ENCODE measurements at regions of chr15 and their contacts with region 1.

Region 1: GRCh38 chr15:96345560-96346399 is 15.3 kb downstream of the NR2F2 start:
- DNase-seq: peak; percentile 95

Region 2: GRCh38 chr15:95169541-95170459 is 1176.0 kb before region 1 on chr15:
- intact Hi-C with region 1: loop called in 1 of 2 experiments (anchors 10 kb)
- DNase-seq: peak; percentile 85

Region 3: DNA sequence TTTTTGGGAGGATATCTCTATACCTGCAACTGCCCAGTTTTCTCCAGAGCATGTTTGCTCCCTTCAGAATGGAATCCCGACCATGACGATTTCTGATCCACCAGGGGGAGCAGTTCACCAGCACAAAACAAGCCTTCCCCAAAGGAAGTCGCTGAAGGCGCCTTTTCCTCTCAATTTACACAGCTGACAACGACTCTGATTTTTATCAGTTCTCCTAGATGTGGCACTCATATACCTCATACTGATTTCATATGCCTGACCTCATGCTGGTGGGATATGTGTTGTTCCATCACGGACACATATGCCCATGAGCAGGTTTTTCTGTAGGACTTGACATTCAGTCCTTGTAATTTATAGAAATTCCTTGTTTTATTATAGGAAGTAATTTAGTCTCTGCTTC is 1086.3 kb before region 1 on chr15:
- intact Hi-C with region 1: loop called in 1 of 2 experiments (anchors 10 kb)
- DNase-seq: peak; percentile 83

Region 4: GRCh38 chr15:95615436-95615835 is 730.3 kb before region 1 on chr15:
- intact Hi-C with region 1: loop called in 1 of 2 experiments (anchors 10 kb)
- DNase-seq: no peak

Region 5: DNA sequence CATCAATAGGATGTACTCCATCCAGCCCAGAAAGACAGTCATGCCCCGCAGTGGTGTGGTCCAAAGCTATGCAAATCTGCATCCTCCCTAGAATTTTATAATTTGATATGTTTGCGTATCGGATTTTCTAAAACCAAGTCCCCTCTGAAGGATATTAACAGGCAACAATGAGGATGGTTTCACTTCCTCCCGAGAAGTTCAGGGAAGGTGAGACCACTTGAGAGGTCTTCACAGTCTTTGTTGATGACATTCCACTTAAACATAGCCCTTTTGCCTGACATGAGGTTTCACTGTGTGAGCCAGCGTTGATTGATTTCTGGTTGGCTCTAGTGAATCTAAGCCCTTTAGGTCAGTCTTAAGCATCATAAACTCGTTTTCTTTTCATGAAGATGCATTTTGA is 260.8 kb after region 1 on chr15:
- intact Hi-C with region 1: no loop called
- DNase-seq: no peak

Region 6: GRCh38 chr15:96851613-96852012 is 505.8 kb after region 1 on chr15:
- intact Hi-C with region 1: no loop called
- DNase-seq: no peak